Transverse colon (tissue), 4 donors: ENCODE measurements at regions of chr17 and their contacts with region 1.

Region 1: DNA sequence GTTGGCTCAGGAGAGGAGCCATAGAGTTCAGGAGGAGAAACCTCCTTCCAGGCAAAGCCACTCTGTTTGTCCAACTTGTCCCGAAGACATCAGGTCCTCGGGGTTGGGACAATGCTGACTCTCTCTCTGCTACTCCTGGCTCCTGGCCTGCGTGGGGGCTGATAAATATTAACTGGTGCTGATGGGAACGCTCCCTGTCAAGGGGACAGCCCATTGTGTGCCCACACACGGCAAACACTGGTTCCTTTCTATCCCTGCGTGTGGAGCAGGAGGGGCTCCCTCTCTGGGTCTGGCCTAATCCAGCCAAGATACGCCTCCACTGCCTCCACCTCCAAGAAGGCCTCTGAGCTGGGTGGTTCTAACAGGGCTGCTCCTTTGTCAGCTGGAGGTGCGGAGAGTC is 4.4 kb downstream of the KIF19 start:
- DNase-seq: no peak
- H3K4me3 ChIP-seq: no peak overlapping the region
- H3K27ac ChIP-seq: no peak overlapping the region
- H3K4me1 ChIP-seq: peaks cover 0 to 20% (median 13%) of the 10 kb centered on the region in 4 donors
- H3K27me3 ChIP-seq: peaks cover 30% of the 10 kb centered on the region
- CTCF ChIP-seq: no peak
- EP300 ChIP-seq: no peak
- POLR2A ChIP-seq: no peak

Region 2: GRCh38 chr17:74135391-74136167 is 194.9 kb before region 1 on chr17:
- in situ Hi-C with region 1: no loop called
- intact Hi-C with region 1: no loop called
- DNase-seq: no peak
- H3K4me3 ChIP-seq: no peak overlapping the region
- H3K27ac ChIP-seq: no peak overlapping the region
- H3K4me1 ChIP-seq: no peaks in the 10 kb centered on the region
- H3K27me3 ChIP-seq: peaks cover 39% of the 10 kb centered on the region
- CTCF ChIP-seq: no peak
- EP300 ChIP-seq: no peak
- POLR2A ChIP-seq: no peak

Region 3: DNA sequence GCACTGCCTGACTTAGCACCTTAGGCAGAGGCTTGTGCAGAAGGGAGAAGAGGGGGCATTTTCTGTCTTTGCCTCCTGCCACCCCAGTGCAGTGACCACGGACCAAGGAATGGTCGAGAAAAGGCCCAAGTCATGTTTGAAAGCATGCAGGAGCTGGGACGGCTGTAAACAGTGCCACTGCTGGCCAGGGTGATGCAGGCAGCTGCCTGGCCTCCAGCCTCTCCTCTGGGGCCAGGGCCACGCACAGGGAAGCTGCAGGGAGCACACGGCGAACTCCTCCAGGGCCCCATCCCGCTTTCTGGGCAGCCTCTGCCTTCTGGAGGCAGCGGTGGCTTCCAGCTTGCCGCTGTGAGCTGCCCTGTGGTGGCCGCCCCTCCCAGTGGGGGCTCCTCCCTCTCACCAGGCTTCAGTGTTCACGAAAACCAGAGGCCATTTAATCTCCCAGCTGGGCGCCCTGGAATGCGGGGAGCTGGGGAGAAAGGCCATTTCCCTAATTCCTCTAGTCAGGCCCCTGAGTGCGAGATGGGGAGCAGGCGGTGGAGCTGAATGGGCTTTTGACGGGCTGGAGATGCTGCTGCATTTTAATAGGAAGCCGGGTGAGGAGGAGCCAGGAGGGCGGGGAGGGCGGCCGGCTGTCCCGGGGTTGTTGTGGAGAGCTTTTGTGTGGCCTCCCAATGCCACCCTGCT is 85.2 kb before region 1 on chr17:
- in situ Hi-C with region 1: no loop called
- intact Hi-C with region 1: no loop called
- DNase-seq: no peak
- H3K4me3 ChIP-seq: no peak overlapping the region
- H3K27ac ChIP-seq: peak overlapping the region in 1 of 4 donors; percentile 0
- H3K4me1 ChIP-seq: no peaks in the 10 kb centered on the region
- H3K27me3 ChIP-seq: no peaks in the 10 kb centered on the region
- CTCF ChIP-seq: no peak
- EP300 ChIP-seq: no peak
- POLR2A ChIP-seq: no peak

Region 4: DNA sequence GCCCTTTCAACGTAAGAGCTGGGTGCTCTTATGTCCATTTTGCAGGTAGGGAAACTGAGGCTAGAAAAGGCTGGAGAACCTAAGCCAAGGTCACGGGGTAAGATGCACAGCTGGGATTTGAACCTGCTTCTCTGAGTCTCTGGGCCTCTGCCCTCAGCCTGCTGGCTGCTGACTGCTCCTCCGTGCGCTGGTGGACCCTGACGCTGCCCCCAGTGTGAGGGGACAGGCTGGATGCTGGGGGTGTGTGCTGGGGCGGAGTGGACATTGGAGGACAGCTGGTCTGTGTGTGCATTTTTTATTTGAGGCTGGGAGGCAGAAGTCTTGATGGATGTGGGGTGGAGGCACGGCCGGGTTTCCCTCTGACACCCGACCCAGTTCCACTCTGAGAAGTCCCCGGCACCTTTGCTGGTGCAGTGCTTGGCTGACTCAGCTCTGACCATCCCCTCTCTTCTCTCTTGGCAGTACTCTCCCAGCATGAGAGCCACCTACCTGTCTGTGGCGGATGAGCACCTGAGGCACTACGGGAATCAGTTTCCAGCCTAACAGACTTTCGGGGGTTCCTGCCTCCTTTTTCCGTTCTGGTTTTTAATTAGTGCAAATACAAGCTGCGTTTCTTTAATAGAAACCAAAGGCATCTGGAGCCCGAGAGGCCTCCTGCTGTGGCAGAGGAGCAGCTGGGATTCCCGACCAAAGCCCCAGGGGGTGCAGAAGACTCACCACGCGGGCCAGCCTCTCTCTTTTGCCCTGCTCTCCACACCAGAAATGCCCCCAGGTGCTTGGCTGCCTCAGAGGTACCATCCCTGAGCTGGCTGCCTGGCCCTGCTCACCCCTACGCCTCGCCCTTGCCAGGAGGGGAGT is 70.5 kb before region 1 on chr17:
- in situ Hi-C with region 1: no loop called
- intact Hi-C with region 1: loop called (anchors 2 kb)
- DNase-seq: no peak
- H3K4me3 ChIP-seq: no peak overlapping the region
- H3K27ac ChIP-seq: no peak overlapping the region
- H3K4me1 ChIP-seq: no peaks in the 10 kb centered on the region
- H3K27me3 ChIP-seq: no peaks in the 10 kb centered on the region
- CTCF ChIP-seq: no peak
- EP300 ChIP-seq: no peak
- POLR2A ChIP-seq: no peak

Region 5: DNA sequence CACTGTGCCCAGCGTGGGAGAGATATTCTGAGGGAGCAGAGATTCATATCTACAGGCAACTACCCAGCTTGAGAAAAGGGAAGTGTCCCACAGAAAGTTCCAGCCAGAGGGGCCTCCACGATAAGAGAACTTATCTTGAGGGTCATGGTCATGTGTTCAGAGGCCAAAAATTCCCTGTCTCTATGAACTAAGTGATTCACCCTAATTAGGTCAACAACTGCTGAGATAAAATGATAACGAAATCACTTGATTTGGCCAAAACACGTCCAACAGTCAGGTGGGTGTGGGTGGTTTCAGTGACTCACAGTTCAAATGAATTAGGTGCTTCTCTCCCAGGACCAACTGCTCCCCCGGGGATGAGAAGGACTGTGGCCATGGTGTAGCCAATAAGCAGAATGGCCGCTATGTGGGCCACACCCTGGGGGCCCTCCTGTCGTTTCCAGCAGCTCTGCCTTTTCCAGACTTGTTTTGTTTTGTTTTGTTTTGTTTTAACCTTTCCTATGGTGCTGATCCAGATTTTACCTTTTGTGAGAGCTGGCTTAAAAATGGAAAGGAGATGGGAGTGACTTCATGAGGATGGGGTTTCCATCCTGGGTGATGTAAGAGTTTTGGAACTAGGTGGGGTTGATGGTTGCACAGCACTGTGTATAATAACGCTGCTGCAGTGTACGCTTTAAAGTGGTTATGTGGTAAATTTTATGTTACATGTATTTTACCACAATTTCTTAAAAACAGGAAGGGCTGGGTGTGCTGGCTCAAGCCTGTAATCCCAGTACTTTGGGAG is 47.7 kb before region 1 on chr17:
- in situ Hi-C with region 1: no loop called
- intact Hi-C with region 1: no loop called
- DNase-seq: no peak
- H3K4me3 ChIP-seq: no peak overlapping the region
- H3K27ac ChIP-seq: peak overlapping the region in 1 of 4 donors; percentile 10
- H3K4me1 ChIP-seq: no peaks in the 10 kb centered on the region
- H3K27me3 ChIP-seq: peaks cover 5% of the 10 kb centered on the region
- CTCF ChIP-seq: no peak
- EP300 ChIP-seq: no peak
- POLR2A ChIP-seq: no peak